ENCODE measurements at regions of chr16 and their contacts with region 1.

Region 1: DNA sequence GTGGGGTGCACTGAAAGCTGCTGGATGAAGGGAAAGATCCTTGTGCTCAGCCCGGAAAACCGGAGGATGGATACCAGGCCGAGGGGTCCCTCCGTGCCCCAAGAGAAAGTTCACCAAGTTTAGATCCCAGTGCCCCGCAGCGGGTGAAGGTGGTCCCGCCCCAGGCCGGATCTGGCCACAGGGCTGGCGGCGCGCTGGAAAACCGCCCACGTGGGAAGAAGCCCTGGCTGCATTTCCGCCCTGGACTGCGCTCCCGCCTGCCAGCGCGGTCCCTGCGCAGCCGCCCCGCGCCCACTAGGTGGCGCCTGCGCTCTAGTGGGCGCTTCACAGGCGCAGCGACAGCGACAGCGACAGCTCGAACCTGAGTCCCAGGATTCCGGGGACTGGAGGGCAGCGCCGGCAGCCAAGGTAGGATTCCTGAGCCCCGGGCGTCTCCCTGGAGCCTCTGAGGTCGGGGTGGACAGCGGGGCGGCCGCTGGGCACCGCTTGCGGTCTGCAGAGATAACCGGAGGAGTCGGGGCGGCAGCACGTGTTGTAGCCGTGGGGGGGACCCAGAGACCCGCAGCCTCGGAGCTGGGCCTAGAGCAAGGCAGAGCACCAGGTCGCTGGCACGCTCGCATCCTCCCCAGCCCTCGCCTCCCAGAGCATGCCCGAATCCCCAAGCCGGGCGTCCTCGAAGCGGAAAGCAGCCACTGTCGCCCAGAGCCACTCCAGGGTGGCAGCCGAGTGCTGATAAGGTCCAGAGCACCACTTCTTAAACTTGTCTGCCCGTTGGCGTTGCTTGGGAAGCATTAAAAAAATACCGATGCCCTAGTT is at the start of gene CHD9:
- DNase-seq: peak in 1 of 2 donors; percentile 91
- H3K4me3 ChIP-seq: peak within 1 kb of the TSS; percentile 53 to 62
- H3K27ac ChIP-seq: peak within 1 kb of the TSS; percentile 78
- H3K4me1 ChIP-seq: peaks cover 50% of the 10 kb centered on the region
- H3K27me3 ChIP-seq: no peaks in the 10 kb centered on the region
- CTCF ChIP-seq: peak; percentile 85 to 100 (median 99)
- POLR2A ChIP-seq: no peak
- total RNA-seq, gene CHD9: 77.6 TPM

Region 2: DNA sequence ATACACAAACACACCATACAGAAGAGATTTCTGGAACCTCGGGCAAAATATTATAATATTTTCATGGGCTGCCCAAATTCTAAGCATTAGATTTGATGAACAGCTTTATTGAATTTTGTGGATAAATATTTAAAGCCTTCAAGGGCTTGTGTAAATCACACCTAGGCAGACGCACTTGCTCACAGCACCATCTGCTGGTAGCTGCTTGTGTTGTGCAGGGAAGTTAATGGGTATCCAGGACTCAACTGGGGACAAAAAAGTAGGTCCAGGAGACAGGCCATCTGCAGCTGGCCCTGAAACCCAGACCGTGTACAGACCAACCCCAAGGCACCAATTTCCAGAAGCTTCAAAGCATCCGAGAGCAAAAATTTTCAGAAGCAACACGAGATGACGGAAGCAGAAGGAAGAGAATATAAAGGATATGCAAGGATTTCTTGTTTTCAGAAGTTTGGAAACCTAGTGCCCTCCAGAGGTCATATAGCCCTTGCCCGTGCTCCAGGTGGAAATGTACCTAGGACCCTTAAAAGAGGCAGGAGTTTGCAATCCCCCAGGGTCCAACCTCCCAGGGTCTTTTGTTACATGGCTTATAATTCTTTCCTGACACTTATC is 142.2 kb before region 1 on chr16:
- intact Hi-C with region 1: no loop called
- DNase-seq: no peak
- H3K4me3 ChIP-seq: no peak overlapping the region
- H3K27ac ChIP-seq: no peak overlapping the region
- H3K4me1 ChIP-seq: no peaks in the 10 kb centered on the region
- H3K27me3 ChIP-seq: no peaks in the 10 kb centered on the region
- CTCF ChIP-seq: peak; percentile 9 to 50 (median 26)
- POLR2A ChIP-seq: no peak

Region 3: DNA sequence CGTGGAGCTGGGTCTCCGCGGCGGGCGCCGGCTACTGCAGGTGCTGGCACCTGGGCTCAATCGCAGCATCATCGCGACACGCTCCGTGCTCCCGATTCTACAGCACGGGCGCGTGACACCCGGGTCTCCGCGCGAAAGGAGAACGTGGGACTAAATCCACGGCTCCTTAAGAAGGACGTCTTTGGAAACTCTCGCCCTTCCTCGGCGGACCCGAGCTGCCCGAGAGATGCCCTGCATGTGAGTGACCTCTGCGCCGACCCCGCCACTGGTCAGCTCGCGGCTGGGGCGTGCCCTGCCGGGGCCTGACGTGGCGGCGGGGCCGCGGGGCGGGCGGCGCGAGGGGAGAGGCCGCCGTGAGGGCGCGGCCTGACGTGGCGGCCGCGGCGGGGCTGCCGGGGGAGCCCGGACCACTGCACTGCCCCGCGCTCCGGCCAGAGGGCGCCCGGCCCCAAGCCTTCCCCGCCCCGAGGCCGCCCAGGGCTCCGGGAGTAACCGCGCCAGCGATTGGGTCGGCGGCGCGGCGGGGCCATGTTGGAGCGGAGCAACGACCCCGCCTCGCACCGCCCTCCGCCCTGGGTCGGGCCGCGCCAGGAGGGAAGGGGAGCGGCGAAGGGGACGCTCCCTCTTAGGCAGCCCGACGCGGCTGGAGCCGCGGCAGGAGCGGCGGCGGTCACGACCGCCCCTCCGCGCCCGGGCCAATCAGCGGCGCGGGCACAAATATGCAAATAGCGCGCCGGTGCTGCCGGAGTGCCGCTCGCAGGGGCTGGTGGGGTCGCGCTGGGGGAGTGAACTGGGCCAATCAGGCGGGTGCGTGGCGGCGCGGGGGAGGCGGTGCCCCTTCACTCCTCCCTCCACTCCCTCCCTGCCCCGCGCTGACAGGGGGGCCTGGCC is 75.5 kb after region 1 on chr16:
- intact Hi-C with region 1: loop called (anchors 10 kb)
- DNase-seq: peak in 1 of 2 donors; percentile 94
- H3K4me3 ChIP-seq: peak overlapping the region; percentile 88 to 89
- H3K27ac ChIP-seq: peak overlapping the region; percentile 95
- H3K4me1 ChIP-seq: peaks cover 41% of the 10 kb centered on the region
- H3K27me3 ChIP-seq: no peaks in the 10 kb centered on the region
- CTCF ChIP-seq: peak; percentile 23 to 53 (median 42)
- POLR2A ChIP-seq: peak in 1 of 2 donors; percentile 5

Region 4: GRCh38 chr16:53159781-53160436 is 105.0 kb after region 1 on chr16:
- intact Hi-C with region 1: loop called (anchors 10 kb)
- DNase-seq: no peak
- H3K4me3 ChIP-seq: no peak overlapping the region
- H3K27ac ChIP-seq: no peak overlapping the region
- H3K4me1 ChIP-seq: peaks cover 8% of the 10 kb centered on the region
- H3K27me3 ChIP-seq: no peaks in the 10 kb centered on the region
- CTCF ChIP-seq: peak in 2 of 3 experiments; percentile 37 to 56
- POLR2A ChIP-seq: no peak

Region 5: DNA sequence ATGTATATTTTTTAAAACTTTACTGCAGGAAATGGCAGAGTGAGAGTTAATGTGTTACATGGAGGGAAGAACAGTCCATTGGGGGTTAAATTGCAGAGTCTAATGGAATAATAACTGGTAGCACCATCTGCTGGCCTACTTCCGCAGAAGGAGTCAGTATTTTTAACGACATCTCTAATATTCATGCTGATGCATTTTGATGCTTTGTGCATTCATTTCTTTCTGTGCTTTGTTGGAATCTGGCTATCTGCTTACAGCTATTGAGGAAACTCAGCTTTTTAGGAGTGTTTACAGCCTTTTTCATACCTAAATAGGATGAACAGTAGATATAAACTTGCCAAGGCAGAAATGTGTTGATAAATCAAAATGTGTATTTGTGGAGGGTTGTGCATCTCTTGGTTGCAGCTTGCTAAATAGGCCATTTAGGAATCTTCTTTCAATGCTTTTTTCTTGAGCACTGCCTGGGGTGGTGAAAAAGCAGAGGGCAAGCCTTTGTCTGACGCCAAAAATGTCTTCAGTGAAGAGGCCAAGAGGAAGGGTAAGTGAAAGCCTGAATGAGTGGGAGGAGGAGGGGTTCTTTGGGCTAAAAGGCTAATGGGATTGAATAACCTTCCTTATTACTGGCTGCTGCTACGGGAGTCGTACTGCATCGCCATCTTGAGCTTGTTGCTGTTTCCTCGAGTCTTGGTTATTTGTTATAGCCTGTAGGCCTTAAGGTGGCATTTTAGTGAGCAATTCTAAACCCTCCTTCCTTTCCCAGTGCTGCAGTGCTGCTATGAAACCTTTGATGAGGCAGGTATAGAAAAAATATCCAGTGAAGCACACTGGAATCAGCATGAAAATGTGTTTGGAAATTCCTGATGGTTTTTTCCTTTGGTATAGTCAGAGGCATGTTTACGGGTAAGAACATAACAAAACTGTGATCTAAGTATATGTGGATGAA is 153.2 kb after region 1 on chr16:
- intact Hi-C with region 1: loop called (anchors 10 kb)
- DNase-seq: no peak
- H3K4me3 ChIP-seq: peak overlapping the region; percentile 35 to 47
- H3K27ac ChIP-seq: peak overlapping the region; percentile 74
- H3K4me1 ChIP-seq: peaks cover 49% of the 10 kb centered on the region
- H3K27me3 ChIP-seq: no peaks in the 10 kb centered on the region
- CTCF ChIP-seq: peak in 2 of 3 experiments; percentile 24 to 46
- POLR2A ChIP-seq: no peak

Region 6: GRCh38 chr16:53282975-53283946 is 228.4 kb after region 1 on chr16:
- intact Hi-C with region 1: loop called (anchors 5 kb)
- DNase-seq: no peak
- H3K4me3 ChIP-seq: no peak overlapping the region
- H3K27ac ChIP-seq: no peak overlapping the region
- H3K4me1 ChIP-seq: peaks cover 9% of the 10 kb centered on the region
- H3K27me3 ChIP-seq: no peaks in the 10 kb centered on the region
- CTCF ChIP-seq: peak in 1 of 3 experiments; percentile 27
- POLR2A ChIP-seq: no peak